ENCODE measurements at regions of chr17 and their contacts with region 1.

Region 1: DNA sequence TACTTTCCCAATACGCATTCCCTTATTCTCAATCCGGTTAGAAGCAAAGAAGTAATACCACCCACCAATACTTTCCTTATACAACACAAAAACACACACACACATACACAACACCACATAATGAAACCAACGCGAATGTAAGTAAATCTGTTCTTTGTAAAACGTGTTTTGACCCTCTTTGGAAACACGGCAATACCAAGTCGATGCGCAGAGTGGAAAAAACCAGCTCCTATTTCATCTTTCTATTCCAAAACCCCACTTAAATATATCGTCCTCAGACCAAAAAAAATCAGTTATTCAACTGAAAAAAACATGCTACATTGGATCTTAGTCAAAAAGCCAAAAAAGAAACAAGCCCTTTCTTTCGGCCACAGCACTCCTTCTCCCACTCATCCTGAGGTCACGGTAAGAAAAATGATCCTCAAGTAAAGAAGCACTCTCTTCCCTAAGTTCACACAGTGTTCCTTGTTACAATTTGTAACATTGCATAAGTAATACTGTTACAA is 31.0 kb upstream of the ARL4D start:
- DNase-seq: peak; percentile 91 to 95 (median 94)
- H3K4me3 ChIP-seq: peak overlapping the region in 6 of 7 experiments; percentile 67 to 88 (median 74)
- H3K27ac ChIP-seq: peak overlapping the region; percentile 100
- H3K4me1 ChIP-seq: peaks cover 7 to 46% (median 33%) of the 10 kb centered on the region in 4 experiments
- H3K27me3 ChIP-seq: no peaks in the 10 kb centered on the region

Region 2: DNA sequence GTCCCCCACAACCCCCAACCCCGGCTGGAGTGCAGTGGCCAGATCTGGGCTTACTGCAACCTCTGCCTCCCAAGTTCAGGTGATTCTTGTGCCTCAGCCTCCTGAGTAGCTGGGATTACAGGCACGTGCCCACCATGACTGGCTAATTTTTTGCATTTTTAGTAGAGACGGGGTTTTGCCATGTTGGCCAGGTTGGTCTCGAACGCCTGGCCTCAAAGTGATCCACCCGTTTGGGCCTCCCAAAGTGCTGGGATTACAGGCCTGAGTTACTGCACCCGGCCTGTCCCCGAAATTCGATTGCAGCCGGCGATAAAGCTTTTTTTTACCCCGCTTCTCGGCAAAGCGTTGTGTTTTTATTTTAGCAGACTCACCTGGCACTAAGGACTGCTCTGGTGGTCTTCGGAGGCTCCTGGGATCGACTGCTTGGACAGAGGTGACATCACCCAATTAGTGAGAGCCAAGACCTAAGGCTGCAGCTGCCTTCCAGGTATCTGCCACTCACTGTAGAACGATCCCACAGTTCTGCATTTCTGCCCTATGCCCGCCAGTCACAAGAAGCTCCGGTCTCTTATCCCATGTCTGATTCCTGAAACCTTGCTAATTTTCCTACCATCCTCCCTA is 51.2 kb before region 1 on chr17:
- CTCF ChIA-PET with region 1: no interaction called
- POLR2A ChIA-PET with region 1: interaction called, 44 read pairs
- DNase-seq: peak; percentile 39 to 84 (median 74)
- H3K4me3 ChIP-seq: no peak overlapping the region
- H3K27ac ChIP-seq: no peak overlapping the region
- H3K4me1 ChIP-seq: peaks cover 0 to 6% (median 1%) of the 10 kb centered on the region in 4 experiments
- H3K27me3 ChIP-seq: no peaks in the 10 kb centered on the region

Region 3: GRCh38 chr17:43378766-43379165 is 11.0 kb after region 1 on chr17:
- CTCF ChIA-PET with region 1: interaction called, 3 read pairs
- POLR2A ChIA-PET with region 1: interaction called, 13 read pairs
- DNase-seq: no peak
- H3K4me3 ChIP-seq: no peak overlapping the region
- H3K27ac ChIP-seq: no peak overlapping the region
- H3K4me1 ChIP-seq: no peaks in the 10 kb centered on the region
- H3K27me3 ChIP-seq: no peaks in the 10 kb centered on the region

Region 4: DNA sequence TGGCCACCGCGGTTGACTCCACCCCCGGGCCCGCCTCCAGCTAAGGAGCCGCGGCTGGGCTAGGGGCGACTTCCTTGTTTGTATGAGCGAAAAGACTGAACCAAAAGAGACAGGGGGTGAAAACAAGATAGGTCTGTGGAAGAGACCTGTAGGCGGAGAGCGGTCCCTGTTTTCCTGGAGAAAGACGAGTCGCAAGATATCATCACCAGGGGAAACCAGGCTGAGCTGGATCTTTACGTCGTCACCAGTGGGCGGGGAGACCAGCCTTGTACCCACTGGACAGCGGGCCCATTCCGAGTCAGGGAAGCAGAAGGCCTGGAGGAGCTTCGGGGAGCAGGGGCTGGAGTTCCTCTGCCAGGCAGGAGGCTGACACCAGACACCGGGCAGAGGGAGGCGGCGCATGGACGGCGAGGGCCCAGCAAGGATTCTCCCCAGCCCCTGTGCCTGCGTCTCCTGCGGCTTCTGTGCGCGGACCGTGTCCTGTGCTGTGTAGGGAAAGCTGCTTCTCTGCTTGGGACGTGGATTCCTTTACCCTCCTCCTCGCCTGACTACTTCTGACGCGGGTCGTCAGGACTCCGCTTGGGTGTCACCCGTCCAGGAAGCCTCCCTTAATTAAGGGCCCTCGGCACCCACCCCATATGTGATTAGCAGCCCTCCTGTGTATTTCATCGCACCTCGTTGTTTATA is 20.7 kb after region 1 on chr17:
- CTCF ChIA-PET with region 1: interaction called, 16 read pairs
- POLR2A ChIA-PET with region 1: interaction called, 61 read pairs
- DNase-seq: peak; percentile 90 to 96 (median 95)
- H3K4me3 ChIP-seq: peak overlapping the region; percentile 57 to 98 (median 88)
- H3K27ac ChIP-seq: peak overlapping the region; percentile 84 to 92
- H3K4me1 ChIP-seq: peaks cover 3 to 22% (median 18%) of the 10 kb centered on the region in 4 experiments
- H3K27me3 ChIP-seq: no peaks in the 10 kb centered on the region

Region 5: GRCh38 chr17:43393944-43394482 is 26.2 kb after region 1 on chr17:
- CTCF ChIA-PET with region 1: interaction called, 16 read pairs
- POLR2A ChIA-PET with region 1: interaction called, 61 read pairs
- DNase-seq: peak; percentile 86 to 93 (median 87)
- H3K4me3 ChIP-seq: peak overlapping the region in 1 of 7 experiments; percentile 41
- H3K27ac ChIP-seq: no peak overlapping the region
- H3K4me1 ChIP-seq: peaks cover 8 to 30% (median 25%) of the 10 kb centered on the region in 4 experiments
- H3K27me3 ChIP-seq: no peaks in the 10 kb centered on the region

Region 6: GRCh38 chr17:43483674-43484372 is 116.0 kb after region 1 on chr17 and contains the start of gene DHX8:
- CTCF ChIA-PET with region 1: interaction called, 13 read pairs
- POLR2A ChIA-PET with region 1: interaction called, 26 read pairs
- DNase-seq: peak; percentile 97 to 99 (median 99)
- H3K4me3 ChIP-seq: peak within 1 kb of the TSS; percentile 85 to 97 (median 96)
- H3K27ac ChIP-seq: peak within 1 kb of the TSS; percentile 90
- H3K4me1 ChIP-seq: peaks cover 8 to 24% (median 11%) of the 10 kb centered on the region in 4 experiments
- H3K27me3 ChIP-seq: no peaks in the 10 kb centered on the region

Measured in common myeloid progenitor, CD34-positive (primary cell).